ENCODE measurements at regions of chr5 and their contacts with region 1.

Region 1: DNA sequence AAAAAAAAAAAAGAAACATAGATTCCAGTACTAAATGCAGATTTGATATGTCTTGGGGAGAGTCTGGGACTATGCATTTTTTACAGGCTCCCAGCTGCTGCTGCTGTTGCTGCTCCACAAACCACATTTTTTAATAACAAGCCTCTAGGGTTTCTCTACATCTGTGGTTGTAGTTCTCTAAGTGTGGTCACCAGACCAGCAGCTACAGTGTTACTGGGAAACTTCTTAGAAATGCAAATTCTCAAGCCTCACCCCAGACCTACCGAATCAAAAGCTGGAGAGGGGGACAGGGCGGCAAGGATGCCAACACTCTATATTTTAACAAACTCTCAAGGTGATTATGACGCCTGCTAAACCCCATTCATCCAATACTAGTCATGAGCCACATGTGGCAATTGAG is 293.4 kb upstream of the PTGER4 start:
- DNase-seq: peak; percentile 43
- ATAC-seq: no peak
- H3K4me3 ChIP-seq: no peak overlapping the region
- H3K27ac ChIP-seq: peak overlapping the region; percentile 89
- H3K4me1 ChIP-seq: peaks cover 50% of the 10 kb centered on the region
- H3K27me3 ChIP-seq: no peaks in the 10 kb centered on the region
- CTCF ChIP-seq: no peak

Region 2: DNA sequence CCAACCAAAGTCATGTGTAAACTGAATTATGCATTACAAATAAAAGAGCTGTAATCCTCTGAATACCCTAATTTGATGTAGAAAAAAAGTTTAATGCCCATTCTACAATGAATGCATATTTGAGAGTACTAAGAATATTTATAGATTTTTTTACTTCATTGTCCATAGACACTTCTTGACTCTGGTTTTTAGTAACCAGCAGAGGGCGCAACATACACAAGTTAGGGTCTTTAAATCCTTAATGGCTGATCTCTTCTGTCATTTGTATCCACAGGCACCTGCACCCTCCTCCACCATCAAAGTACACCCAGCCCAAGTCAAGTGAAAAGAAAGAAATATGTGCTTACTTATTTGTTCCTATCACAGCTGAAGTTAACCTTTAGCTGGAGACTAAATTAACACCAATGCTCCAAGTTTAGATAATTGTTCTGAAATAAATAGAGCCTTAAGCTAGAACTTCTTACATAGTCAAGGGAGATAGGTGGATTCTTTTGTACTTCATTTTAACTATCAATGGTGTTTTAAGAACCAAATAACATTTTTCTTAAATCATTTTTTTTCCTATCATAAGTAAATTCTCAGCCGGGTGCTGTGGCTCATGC is 437.3 kb before region 1 on chr5:
- CTCF ChIA-PET with region 1: no interaction called
- POLR2A ChIA-PET with region 1: no interaction called
- intact Hi-C with region 1: loop called (anchors 1 kb)
- DNase-seq: peak; percentile 89
- ATAC-seq: peak; percentile 81
- H3K4me3 ChIP-seq: no peak overlapping the region
- H3K27ac ChIP-seq: no peak overlapping the region
- H3K4me1 ChIP-seq: no peaks in the 10 kb centered on the region
- H3K27me3 ChIP-seq: no peaks in the 10 kb centered on the region
- CTCF ChIP-seq: peak; percentile 93

Region 3: GRCh38 chr5:40171971-40172370 is 214.3 kb before region 1 on chr5:
- CTCF ChIA-PET with region 1: no interaction called
- POLR2A ChIA-PET with region 1: no interaction called
- intact Hi-C with region 1: loop called (anchors 1 kb)
- DNase-seq: peak; percentile 94
- ATAC-seq: peak; percentile 84
- H3K4me3 ChIP-seq: no peak overlapping the region
- H3K27ac ChIP-seq: peak overlapping the region; percentile 74
- H3K4me1 ChIP-seq: peaks cover 23% of the 10 kb centered on the region
- H3K27me3 ChIP-seq: no peaks in the 10 kb centered on the region
- CTCF ChIP-seq: no peak

Region 4: GRCh38 chr5:40410231-40410861 is 24.1 kb after region 1 on chr5:
- CTCF ChIA-PET with region 1: interaction called, 5 read pairs
- POLR2A ChIA-PET with region 1: interaction called, 3 read pairs
- intact Hi-C with region 1: loop called (anchors 1 kb)
- DNase-seq: peak; percentile 71
- ATAC-seq: peak; percentile 6; the same call in 1 of the 2 replicates
- H3K4me3 ChIP-seq: peak overlapping the region; percentile 23
- H3K27ac ChIP-seq: peak overlapping the region; percentile 90
- H3K4me1 ChIP-seq: peaks cover 34% of the 10 kb centered on the region
- H3K27me3 ChIP-seq: no peaks in the 10 kb centered on the region
- CTCF ChIP-seq: no peak

Region 5: DNA sequence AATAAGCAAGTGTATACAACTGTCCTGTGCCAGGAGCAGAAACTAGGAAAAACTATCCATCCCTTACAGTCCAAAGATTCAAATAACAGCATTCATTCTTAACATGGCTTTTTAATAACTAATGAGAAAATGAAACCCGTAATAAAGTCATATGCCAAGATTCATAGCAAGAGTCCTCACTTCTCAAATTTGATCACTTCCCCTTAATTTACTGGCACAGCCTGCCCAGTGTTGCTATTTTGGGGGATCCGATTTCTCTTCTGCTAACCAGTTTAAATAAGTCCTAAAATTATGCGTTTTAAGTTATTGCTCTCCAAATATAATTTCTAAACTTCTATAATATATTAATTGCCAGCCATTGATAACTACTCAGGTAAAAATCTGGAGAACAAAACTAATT is 116.4 kb after region 1 on chr5:
- CTCF ChIA-PET with region 1: no interaction called
- POLR2A ChIA-PET with region 1: no interaction called
- intact Hi-C with region 1: loop called (anchors 1 kb)
- DNase-seq: no peak
- ATAC-seq: no peak
- H3K4me3 ChIP-seq: no peak overlapping the region
- H3K27ac ChIP-seq: peak overlapping the region; percentile 75
- H3K4me1 ChIP-seq: peaks cover 23% of the 10 kb centered on the region
- H3K27me3 ChIP-seq: no peaks in the 10 kb centered on the region
- CTCF ChIP-seq: no peak

Region 6: DNA sequence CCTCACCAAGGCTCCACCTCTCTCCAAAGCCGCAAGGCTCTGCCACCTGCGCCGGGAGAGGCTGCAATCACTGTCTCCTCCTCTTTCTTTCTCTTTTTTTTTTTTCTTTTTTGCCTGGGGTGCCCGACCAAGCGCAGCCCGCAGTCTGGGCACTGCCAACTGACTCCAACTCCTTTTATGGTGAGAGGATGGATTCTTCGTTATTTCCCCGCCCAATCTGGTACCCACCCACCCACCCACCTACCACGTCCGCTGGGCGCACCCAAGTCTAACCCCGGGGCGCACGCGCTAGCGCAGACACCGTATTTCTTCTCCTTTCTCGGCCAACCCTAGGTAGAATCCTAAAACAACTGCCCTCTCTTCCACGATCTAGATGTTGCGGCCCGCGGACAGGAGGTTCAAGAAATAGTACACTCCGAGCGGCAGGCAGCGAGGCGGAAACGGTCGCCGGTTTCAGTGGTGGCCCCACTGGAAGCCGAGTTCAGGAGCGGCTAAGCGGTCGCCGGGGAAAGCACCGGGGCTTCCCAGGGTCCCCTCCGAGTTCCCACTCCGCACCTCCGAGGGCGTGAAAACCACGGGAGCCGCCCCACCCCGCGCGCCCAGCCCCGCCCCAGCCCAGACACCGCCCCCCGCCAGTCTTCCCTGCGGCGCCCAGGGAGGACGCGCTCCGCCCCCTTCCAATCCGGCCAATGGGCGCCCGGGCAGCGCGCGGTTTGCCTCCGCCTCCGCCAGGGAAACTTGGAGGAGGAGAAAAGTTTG is 293.0 kb after region 1 on chr5:
- CTCF ChIA-PET with region 1: no interaction called
- POLR2A ChIA-PET with region 1: interaction called, 4 read pairs
- intact Hi-C with region 1: loop called (anchors 2 kb)
- DNase-seq: peak; percentile 96
- ATAC-seq: peak; percentile 69
- H3K4me3 ChIP-seq: peak overlapping the region; percentile 90
- H3K27ac ChIP-seq: peak overlapping the region; percentile 92
- H3K4me1 ChIP-seq: peaks cover 39% of the 10 kb centered on the region
- H3K27me3 ChIP-seq: no peaks in the 10 kb centered on the region
- CTCF ChIP-seq: no peak